ENCODE measurements at regions of chr18 and their contacts with region 1.

Region 1: GRCh38 chr18:79378542-79379250 is 17.0 kb upstream of the NFATC1 start:
- DNase-seq: peak; percentile 79 to 85 (median 83)
- H3K4me3 ChIP-seq: no peak overlapping the region
- H3K4me3 Mint-ChIP-seq: peak overlapping the region in 1 of 8 donors; percentile 4
- H3K27ac ChIP-seq: no peak overlapping the region
- H3K27ac Mint-ChIP-seq: peak overlapping the region in 5 of 7 donors; percentile 47 to 88 (median 68)
- H3K4me1 ChIP-seq: peaks cover 7% of the 10 kb centered on the region
- H3K4me1 Mint-ChIP-seq: peaks cover 4 to 10% (median 8%) of the 10 kb centered on the region in 4 donors
- H3K27me3 ChIP-seq: no peaks in the 10 kb centered on the region
- H3K27me3 Mint-ChIP-seq: no peaks in the 10 kb centered on the region

Region 2: GRCh38 chr18:77379976-77380509 is 1998.7 kb before region 1 on chr18:
- CTCF ChIA-PET with region 1: no interaction called
- POLR2A ChIA-PET with region 1: no interaction called
- intact Hi-C with region 1: no loop called
- DNase-seq: no peak
- H3K4me3 ChIP-seq: no peak overlapping the region
- H3K4me3 Mint-ChIP-seq: no peak overlapping the region
- H3K27ac ChIP-seq: no peak overlapping the region
- H3K27ac Mint-ChIP-seq: no peak overlapping the region
- H3K4me1 ChIP-seq: no peaks in the 10 kb centered on the region
- H3K4me1 Mint-ChIP-seq: no peaks in the 10 kb centered on the region
- H3K27me3 ChIP-seq: no peaks in the 10 kb centered on the region
- H3K27me3 Mint-ChIP-seq: peaks cover 16 to 30% of the 10 kb centered on the region in 2 donors

Region 3: GRCh38 chr18:78031589-78031988 is 1347.1 kb before region 1 on chr18:
- CTCF ChIA-PET with region 1: no interaction called
- POLR2A ChIA-PET with region 1: no interaction called
- intact Hi-C with region 1: no loop called
- DNase-seq: no peak
- H3K4me3 ChIP-seq: no peak overlapping the region
- H3K4me3 Mint-ChIP-seq: no peak overlapping the region
- H3K27ac ChIP-seq: no peak overlapping the region
- H3K27ac Mint-ChIP-seq: no peak overlapping the region
- H3K4me1 ChIP-seq: no peaks in the 10 kb centered on the region
- H3K4me1 Mint-ChIP-seq: no peaks in the 10 kb centered on the region
- H3K27me3 ChIP-seq: no peaks in the 10 kb centered on the region
- H3K27me3 Mint-ChIP-seq: no peaks in the 10 kb centered on the region

Region 4: GRCh38 chr18:79360933-79361332 is 17.8 kb before region 1 on chr18:
- CTCF ChIA-PET with region 1: interaction called, 12 read pairs
- POLR2A ChIA-PET with region 1: no interaction called
- intact Hi-C with region 1: no loop called
- DNase-seq: no peak
- H3K4me3 ChIP-seq: no peak overlapping the region
- H3K4me3 Mint-ChIP-seq: no peak overlapping the region
- H3K27ac ChIP-seq: no peak overlapping the region
- H3K27ac Mint-ChIP-seq: peak overlapping the region in 1 of 7 donors; percentile 36
- H3K4me1 ChIP-seq: no peaks in the 10 kb centered on the region
- H3K4me1 Mint-ChIP-seq: peaks cover 0 to 6% (median 0%) of the 10 kb centered on the region in 4 donors
- H3K27me3 ChIP-seq: no peaks in the 10 kb centered on the region
- H3K27me3 Mint-ChIP-seq: no peaks in the 10 kb centered on the region

Region 5: DNA sequence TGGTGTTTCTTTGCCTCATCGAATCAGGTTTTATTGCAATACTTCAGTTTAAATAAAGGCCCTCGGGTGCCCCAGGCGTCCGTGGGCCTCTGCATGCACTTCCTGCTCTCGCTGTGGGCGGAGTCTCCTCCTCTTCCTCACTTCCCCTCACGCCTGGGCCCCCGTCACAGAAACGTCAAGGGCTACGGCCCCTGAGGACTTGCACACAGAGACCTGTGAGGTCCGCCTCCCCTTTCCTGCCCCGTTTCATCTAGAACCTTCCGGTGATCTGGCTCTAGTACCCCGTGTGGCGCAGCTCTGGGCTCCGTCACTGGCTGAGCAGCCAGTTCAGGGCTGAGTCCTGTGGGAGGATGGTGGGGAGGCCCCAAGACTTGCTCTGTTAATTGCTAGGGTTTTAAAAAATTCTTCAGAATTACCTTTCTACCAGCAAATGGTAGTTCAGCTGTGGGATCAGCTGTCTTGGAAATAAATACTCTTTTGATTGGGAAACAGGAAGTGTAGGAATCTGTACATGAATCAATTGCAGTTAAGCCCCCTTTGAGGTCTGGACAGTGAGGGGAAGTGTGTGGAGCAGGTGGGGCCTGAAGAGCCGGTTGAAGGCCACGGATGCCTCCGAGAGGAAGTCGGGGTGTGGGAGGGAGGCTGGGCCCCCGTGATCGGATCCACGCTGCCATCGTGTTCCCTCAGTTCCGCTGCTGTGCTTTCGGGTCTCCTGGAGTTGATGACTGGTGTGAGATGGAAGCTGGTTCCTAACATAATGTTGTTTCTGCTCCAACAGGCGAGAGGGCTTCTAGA is 27.3 kb after region 1 on chr18:
- CTCF ChIA-PET with region 1: interaction called, 18 read pairs
- POLR2A ChIA-PET with region 1: interaction called, 3 read pairs
- intact Hi-C with region 1: no loop called
- DNase-seq: peak; percentile 91 to 98 (median 95)
- H3K4me3 ChIP-seq: peak overlapping the region; percentile 49 to 60
- H3K4me3 Mint-ChIP-seq: peak overlapping the region; percentile 83 to 95 (median 92)
- H3K27ac ChIP-seq: peak overlapping the region; percentile 87
- H3K27ac Mint-ChIP-seq: peak overlapping the region in 6 of 7 donors; percentile 95 to 100 (median 98)
- H3K4me1 ChIP-seq: peaks cover 62% of the 10 kb centered on the region
- H3K4me1 Mint-ChIP-seq: peaks cover 40 to 66% (median 55%) of the 10 kb centered on the region in 4 donors
- H3K27me3 ChIP-seq: no peaks in the 10 kb centered on the region
- H3K27me3 Mint-ChIP-seq: no peaks in the 10 kb centered on the region

Region 6: GRCh38 chr18:79523736-79524180 is 145.1 kb after region 1 on chr18:
- CTCF ChIA-PET with region 1: interaction called, 140 read pairs
- POLR2A ChIA-PET with region 1: interaction called, 8 read pairs
- intact Hi-C with region 1: loop called (anchors 1 kb)
- DNase-seq: peak; percentile 82 to 93 (median 84)
- H3K4me3 ChIP-seq: peak overlapping the region in 1 of 2 donors; percentile 68
- H3K4me3 Mint-ChIP-seq: peak overlapping the region; percentile 86 to 95 (median 92)
- H3K27ac ChIP-seq: peak overlapping the region; percentile 85
- H3K27ac Mint-ChIP-seq: peak overlapping the region; percentile 97 to 99 (median 99)
- H3K4me1 ChIP-seq: peaks cover 64% of the 10 kb centered on the region
- H3K4me1 Mint-ChIP-seq: peaks cover 40 to 84% (median 57%) of the 10 kb centered on the region in 4 donors
- H3K27me3 ChIP-seq: no peaks in the 10 kb centered on the region
- H3K27me3 Mint-ChIP-seq: no peaks in the 10 kb centered on the region

Region 7: GRCh38 chr18:79644006-79644665 is 265.4 kb after region 1 on chr18:
- CTCF ChIA-PET with region 1: interaction called, 133 read pairs
- POLR2A ChIA-PET with region 1: no interaction called
- intact Hi-C with region 1: loop called (anchors 1 kb)
- DNase-seq: peak; percentile 51 to 67 (median 54)
- H3K4me3 ChIP-seq: no peak overlapping the region
- H3K4me3 Mint-ChIP-seq: no peak overlapping the region
- H3K27ac ChIP-seq: no peak overlapping the region
- H3K27ac Mint-ChIP-seq: no peak overlapping the region
- H3K4me1 ChIP-seq: peaks cover 7% of the 10 kb centered on the region
- H3K4me1 Mint-ChIP-seq: no peaks in the 10 kb centered on the region
- H3K27me3 ChIP-seq: no peaks in the 10 kb centered on the region
- H3K27me3 Mint-ChIP-seq: peaks cover 0 to 7% of the 10 kb centered on the region in 2 donors

Region 8: GRCh38 chr18:79988451-79989194 is 609.9 kb after region 1 on chr18 and contains the start of gene TXNL4A:
- CTCF ChIA-PET with region 1: no interaction called
- POLR2A ChIA-PET with region 1: no interaction called
- intact Hi-C with region 1: loop called (anchors 5 kb)
- DNase-seq: peak; percentile 81 to 87 (median 84)
- H3K4me3 ChIP-seq: peak within 1 kb of the TSS; percentile 78 to 89
- H3K4me3 Mint-ChIP-seq: peak within 1 kb of the TSS; percentile 92 to 96 (median 94)
- H3K27ac ChIP-seq: peak within 1 kb of the TSS; percentile 95
- H3K27ac Mint-ChIP-seq: peak within 1 kb of the TSS; percentile 80 to 100 (median 98)
- H3K4me1 ChIP-seq: peaks cover 38% of the 10 kb centered on the region
- H3K4me1 Mint-ChIP-seq: peaks cover 28 to 49% (median 38%) of the 10 kb centered on the region in 4 donors
- H3K27me3 ChIP-seq: no peaks in the 10 kb centered on the region
- H3K27me3 Mint-ChIP-seq: no peaks in the 10 kb centered on the region
- total RNA-seq, gene TXNL4A: 72.6 to 76.1 TPM